HCT116 (cell line): ENCODE measurements at regions of chr9 and their contacts with region 1.

Region 1: GRCh38 chr9:128684279-128685021 is 4.6 kb upstream of the SET start:
- DNase-seq: peak; percentile 86
- ATAC-seq: peak; percentile 72
- H3K4me3 ChIP-seq: peak overlapping the region; percentile 96
- H3K27ac ChIP-seq: peak overlapping the region; percentile 94
- H3K4me1 ChIP-seq: peaks cover 25 to 44% of the 10 kb centered on the region in 2 experiments
- H3K27me3 ChIP-seq: no peaks in the 10 kb centered on the region
- CTCF ChIP-seq: no peak
- POLR2A ChIP-seq: peak; percentile 93
- RAD21 ChIP-seq: no peak

Region 2: DNA sequence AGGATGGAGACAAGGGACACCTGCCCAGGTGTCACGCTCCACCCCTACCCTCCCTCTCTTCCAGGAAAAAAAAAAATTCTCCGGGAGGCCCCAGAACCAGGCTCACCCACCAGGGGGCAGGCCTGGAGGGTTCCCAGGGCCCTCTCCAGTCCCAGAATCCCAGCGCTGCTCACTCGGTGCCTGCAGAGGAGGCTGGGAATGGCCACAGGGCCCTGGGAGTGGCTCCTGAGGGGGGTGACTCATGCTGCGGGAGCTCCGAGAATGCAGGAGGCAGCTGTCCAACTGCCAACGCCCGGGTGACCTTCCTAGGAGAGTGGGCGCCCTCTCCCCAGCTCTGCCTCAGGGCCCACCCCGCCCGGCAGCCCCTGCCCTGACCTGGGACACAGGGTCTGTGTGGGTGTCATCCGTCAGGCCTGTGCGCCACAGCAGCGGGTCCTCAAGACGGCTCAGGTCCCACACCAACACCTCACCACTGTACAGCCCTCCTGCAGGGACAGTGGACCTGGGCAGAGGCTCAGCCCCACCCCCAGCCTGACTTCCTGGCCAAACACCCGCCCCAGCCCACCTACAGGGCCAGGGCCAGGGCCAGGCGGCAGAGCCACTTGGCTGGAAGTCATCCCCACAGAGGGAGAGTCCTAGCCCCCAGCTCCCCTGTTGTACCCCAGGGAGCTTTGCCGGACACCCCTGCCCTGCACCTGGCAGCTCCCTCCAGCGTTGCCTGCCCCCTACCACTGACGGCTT is 49.0 kb before region 1 on chr9:
- CTCF ChIA-PET with region 1: interaction called, 14 read pairs
- POLR2A ChIA-PET with region 1: interaction called, 11 read pairs
- RAD21 ChIA-PET with region 1: no interaction called
- intact Hi-C with region 1: no loop called
- DNase-seq: peak; percentile 94
- ATAC-seq: peak; percentile 90
- H3K4me3 ChIP-seq: peak overlapping the region; percentile 35 to 53
- H3K27ac ChIP-seq: peak overlapping the region; percentile 99
- H3K4me1 ChIP-seq: peaks cover 28 to 46% of the 10 kb centered on the region in 2 experiments
- H3K27me3 ChIP-seq: no peaks in the 10 kb centered on the region
- CTCF ChIP-seq: peak in 2 of 3 experiments; percentile 85 to 95; a peak in 4 of 6 replicates
- POLR2A ChIP-seq: no peak
- RAD21 ChIP-seq: no peak

Region 3: GRCh38 chr9:128656416-128657343 is 27.8 kb before region 1 on chr9 and contains the start of gene DYNC2I2:
- CTCF ChIA-PET with region 1: interaction called, 4 read pairs
- POLR2A ChIA-PET with region 1: interaction called, 22 read pairs
- RAD21 ChIA-PET with region 1: no interaction called
- intact Hi-C with region 1: no loop called
- DNase-seq: peak; percentile 89
- ATAC-seq: peak; percentile 88
- H3K4me3 ChIP-seq: peak within 1 kb of the TSS; percentile 75 to 83
- H3K27ac ChIP-seq: peak within 1 kb of the TSS; percentile 90
- H3K4me1 ChIP-seq: peaks cover 6 to 35% of the 10 kb centered on the region in 2 experiments
- H3K27me3 ChIP-seq: no peaks in the 10 kb centered on the region
- CTCF ChIP-seq: no peak
- POLR2A ChIP-seq: peak; percentile 70
- RAD21 ChIP-seq: no peak
- total RNA-seq, gene DYNC2I2: 155 TPM

Region 4: DNA sequence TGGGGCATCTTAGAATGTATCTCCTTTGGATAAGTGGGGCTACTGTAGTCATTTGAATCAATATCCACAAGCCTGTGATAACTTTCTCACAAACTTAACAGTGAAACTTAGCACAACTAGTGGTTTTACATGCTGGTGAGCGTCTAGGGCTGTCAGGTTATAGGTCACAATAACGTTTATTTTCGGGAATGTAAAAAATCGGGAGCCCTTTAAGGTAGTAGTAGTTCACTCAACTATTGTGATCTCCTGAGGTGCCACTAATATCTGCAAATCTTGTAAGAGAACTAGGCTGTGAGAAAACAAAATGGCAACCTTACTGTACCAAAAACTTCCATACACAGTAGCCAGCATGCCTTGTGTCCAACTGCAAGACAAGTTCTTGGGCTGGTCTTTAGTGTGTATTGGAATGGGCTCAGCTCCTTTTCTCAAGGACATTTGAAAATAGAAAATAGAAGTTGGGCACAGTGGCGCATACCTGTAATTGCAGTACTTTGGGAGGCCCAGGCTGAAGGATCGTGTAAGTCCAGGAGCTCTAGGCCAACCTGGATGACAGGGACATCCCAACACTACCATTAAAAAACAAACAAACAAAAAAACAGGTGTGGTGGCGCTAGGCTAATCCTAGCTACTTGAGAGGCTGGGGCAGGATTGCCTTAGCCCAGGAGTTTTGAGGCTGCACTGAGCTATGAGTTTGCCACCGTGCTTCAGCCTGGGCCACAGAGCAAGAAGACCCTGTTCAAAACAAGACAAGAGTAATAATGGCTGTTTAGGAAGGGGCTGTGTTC is 12.7 kb after region 1 on chr9:
- CTCF ChIA-PET with region 1: interaction called, 9 read pairs
- POLR2A ChIA-PET with region 1: interaction called, 24 read pairs
- RAD21 ChIA-PET with region 1: no interaction called
- intact Hi-C with region 1: no loop called
- DNase-seq: no peak
- ATAC-seq: peak; percentile 46
- H3K4me3 ChIP-seq: no peak overlapping the region
- H3K27ac ChIP-seq: peak overlapping the region; percentile 72
- H3K4me1 ChIP-seq: peaks cover 27 to 46% of the 10 kb centered on the region in 2 experiments
- H3K27me3 ChIP-seq: no peaks in the 10 kb centered on the region
- CTCF ChIP-seq: no peak
- POLR2A ChIP-seq: no peak
- RAD21 ChIP-seq: no peak

Region 5: DNA sequence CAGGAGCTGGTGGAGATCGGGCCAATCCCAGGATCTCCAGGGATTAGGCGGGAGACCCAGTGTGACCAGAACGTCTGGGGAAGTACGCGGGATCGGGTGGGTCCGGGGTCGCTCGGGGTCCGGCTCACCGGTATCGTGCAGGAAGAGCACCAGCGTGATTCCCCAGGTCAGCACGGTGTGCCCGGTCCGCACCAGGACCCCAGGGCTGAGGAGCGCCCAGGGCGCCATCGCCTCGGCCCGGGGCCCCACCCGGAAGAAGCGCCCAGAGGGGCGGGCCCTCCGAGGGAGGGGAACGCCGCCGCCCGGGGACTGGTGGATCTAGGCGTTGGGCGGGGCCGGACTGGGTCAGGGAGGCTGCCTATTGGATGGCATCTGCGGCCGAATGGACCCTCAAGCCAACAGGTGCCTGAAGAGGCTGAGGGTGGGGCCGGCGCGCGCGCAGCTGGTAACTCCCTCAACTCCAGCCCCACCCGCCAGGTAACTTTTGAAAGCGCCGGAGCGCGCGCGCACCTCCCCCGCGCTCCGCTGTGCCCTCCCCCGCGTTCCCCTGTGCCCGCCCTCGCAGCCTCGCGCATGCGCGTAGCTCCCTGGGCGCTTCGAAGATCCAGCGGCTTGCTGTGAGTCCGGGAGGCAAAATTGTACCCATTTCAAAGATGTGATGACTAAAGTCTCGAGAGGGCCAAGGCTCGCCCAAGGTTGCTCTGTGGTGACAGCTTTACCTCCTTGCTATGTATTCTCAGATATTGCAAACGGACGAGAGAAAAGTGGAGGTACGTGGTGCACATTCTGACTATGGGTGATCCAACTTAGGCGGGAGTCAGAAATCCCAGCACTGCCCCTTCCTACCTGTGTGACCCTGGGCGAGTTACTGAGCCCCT is 39.7 kb after region 1 on chr9 and contains the start of gene ZDHHC12:
- CTCF ChIA-PET with region 1: no interaction called
- POLR2A ChIA-PET with region 1: interaction called, 12 read pairs
- RAD21 ChIA-PET with region 1: no interaction called
- intact Hi-C with region 1: no loop called
- DNase-seq: peak; percentile 96
- ATAC-seq: peak; percentile 93
- H3K4me3 ChIP-seq: peak within 1 kb of the TSS; percentile 93 to 97
- H3K27ac ChIP-seq: peak within 1 kb of the TSS; percentile 65
- H3K4me1 ChIP-seq: peaks cover 9 to 28% of the 10 kb centered on the region in 2 experiments
- H3K27me3 ChIP-seq: no peaks in the 10 kb centered on the region
- CTCF ChIP-seq: no peak
- POLR2A ChIP-seq: peak; percentile 82
- RAD21 ChIP-seq: no peak
- total RNA-seq, gene ZDHHC12: 57.6 TPM

Region 6: GRCh38 chr9:129726322-129727160 is 1042.1 kb after region 1 on chr9:
- CTCF ChIA-PET with region 1: no interaction called
- POLR2A ChIA-PET with region 1: no interaction called
- RAD21 ChIA-PET with region 1: no interaction called
- intact Hi-C with region 1: no loop called
- DNase-seq: peak; percentile 64
- ATAC-seq: peak; percentile 99
- H3K4me3 ChIP-seq: peak overlapping the region; percentile 11 to 33; a peak in 2 of 4 replicates
- H3K27ac ChIP-seq: peak overlapping the region; percentile 0; the same call in 1 of the 2 replicates
- H3K4me1 ChIP-seq: peaks cover 0 to 10% of the 10 kb centered on the region in 2 experiments; a peak in 3 of 4 replicates
- H3K27me3 ChIP-seq: no peaks in the 10 kb centered on the region
- CTCF ChIP-seq: peak; percentile 94 to 98 (median 96)
- POLR2A ChIP-seq: no peak
- RAD21 ChIP-seq: peak; percentile 94